ENCODE measurements at regions of chr18 and their contacts with region 1.

Region 1: GRCh38 chr18:8507361-8507760 is 101.9 kb upstream of the RAB12 start:
- DNase-seq: no peak
- ATAC-seq: no peak
- H3K4me3 ChIP-seq: no peak overlapping the region
- H3K27ac ChIP-seq: no peak overlapping the region
- H3K4me1 ChIP-seq: no peaks in the 10 kb centered on the region
- H3K27me3 ChIP-seq: 0 out of 2 replicates have a peak, but pooled peaks cover 4% of the 10 kb centered on the region
- CTCF ChIP-seq: peak; percentile 52

Region 2: GRCh38 chr18:8443505-8443904 is 63.9 kb before region 1 on chr18:
- CTCF ChIA-PET with region 1: no interaction called
- POLR2A ChIA-PET with region 1: no interaction called
- intact Hi-C with region 1: loop called (anchors 10 kb)
- DNase-seq: peak; percentile 62
- ATAC-seq: peak; percentile 69
- H3K4me3 ChIP-seq: no peak overlapping the region
- H3K27ac ChIP-seq: no peak overlapping the region
- H3K4me1 ChIP-seq: peaks cover 28% of the 10 kb centered on the region
- H3K27me3 ChIP-seq: no peaks in the 10 kb centered on the region
- CTCF ChIP-seq: no peak

Measured in PC-3 (cell line).